ENCODE measurements at regions of chr14 and their contacts with region 1.

Region 1: DNA sequence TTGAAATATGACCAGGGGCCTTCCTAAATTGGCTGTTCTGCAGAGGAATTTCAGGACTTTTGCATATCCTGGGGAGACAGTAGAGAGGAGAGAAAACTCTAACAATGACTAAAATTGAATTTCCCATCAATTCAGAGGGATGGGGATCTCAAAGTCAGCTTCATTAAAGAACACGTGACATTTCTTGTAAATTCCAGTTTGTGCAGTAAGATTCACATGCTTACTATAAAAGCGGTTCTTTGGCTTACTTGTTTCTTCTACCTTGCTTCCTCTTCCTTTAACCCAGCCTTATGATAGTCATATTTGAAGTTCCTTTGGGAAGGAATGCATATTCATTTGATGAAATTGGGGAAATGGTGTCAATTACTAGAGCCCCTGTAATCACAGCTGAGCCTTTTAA is 143.7 kb upstream of the GZMB start:
- DNase-seq: no peak
- ATAC-seq: no peak
- H3K4me3 ChIP-seq: no peak overlapping the region
- H3K27ac ChIP-seq: no peak overlapping the region
- H3K4me1 ChIP-seq: no peaks in the 10 kb centered on the region
- H3K27me3 ChIP-seq: no peaks in the 10 kb centered on the region
- CTCF ChIP-seq: no peak

Region 2: DNA sequence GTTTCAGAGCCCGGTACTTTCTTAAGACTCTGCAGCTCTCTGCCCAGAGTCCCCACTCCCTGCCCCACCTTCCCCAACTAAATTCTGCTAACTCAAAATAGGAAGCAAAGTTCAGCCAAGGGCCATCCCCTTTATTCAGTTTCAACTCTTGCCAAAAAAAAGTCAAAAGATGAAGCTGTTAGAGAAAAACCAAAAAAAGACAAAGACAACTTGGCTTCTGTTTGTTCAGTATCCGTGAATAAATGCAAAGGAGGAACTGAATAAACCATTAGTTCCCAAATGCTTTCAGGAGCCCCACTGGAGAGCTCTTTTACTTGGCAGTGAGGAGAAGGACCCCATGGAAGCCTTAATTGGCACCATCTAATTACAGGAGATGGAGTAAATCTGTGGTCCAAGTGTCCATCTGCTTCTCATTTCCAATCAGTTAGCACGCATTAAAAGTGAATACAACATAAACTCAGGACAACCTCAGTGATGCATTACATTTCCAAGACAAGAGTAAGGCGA is 11.8 kb after region 1 on chr14:
- intact Hi-C with region 1: loop called in 1 of 2 experiments (anchors 1 kb)
- DNase-seq: no peak
- ATAC-seq: no peak
- H3K4me3 ChIP-seq: no peak overlapping the region
- H3K27ac ChIP-seq: no peak overlapping the region
- H3K4me1 ChIP-seq: no peaks in the 10 kb centered on the region
- H3K27me3 ChIP-seq: no peaks in the 10 kb centered on the region
- CTCF ChIP-seq: no peak

Region 3: DNA sequence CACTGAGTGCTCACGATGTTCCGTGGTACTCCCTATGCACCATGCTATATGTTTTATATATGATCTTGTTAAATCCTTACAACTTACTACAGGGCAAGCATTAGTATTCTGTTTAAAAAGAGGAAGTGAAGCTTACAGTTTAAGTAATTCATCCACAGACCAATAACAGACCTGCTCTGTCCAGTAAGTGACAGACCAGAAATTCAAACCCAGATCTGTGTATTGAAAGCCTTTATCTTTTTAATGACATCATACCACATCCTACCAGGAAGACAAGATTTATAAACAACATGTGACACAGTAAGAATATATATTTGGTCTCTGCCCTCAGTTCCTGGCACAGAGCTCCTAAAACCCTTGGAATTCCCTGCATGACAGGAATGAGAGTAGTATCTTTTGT is 65.8 kb after region 1 on chr14:
- intact Hi-C with region 1: no loop called
- DNase-seq: no peak
- ATAC-seq: no peak
- H3K4me3 ChIP-seq: no peak overlapping the region
- H3K27ac ChIP-seq: no peak overlapping the region
- H3K4me1 ChIP-seq: no peaks in the 10 kb centered on the region
- H3K27me3 ChIP-seq: no peaks in the 10 kb centered on the region
- CTCF ChIP-seq: no peak

Region 4: GRCh38 chr14:25049568-25050268 is 272.0 kb after region 1 on chr14 and contains the start of gene STXBP6:
- intact Hi-C with region 1: no loop called
- DNase-seq: peak; percentile 76 to 80
- ATAC-seq: peak; percentile 46 to 80 (median 75)
- H3K4me3 ChIP-seq: peak within 1 kb of the TSS; percentile 71
- H3K27ac ChIP-seq: peak within 1 kb of the TSS; percentile 46
- H3K4me1 ChIP-seq: no peaks in the 10 kb centered on the region
- H3K27me3 ChIP-seq: peaks cover 0 to 51% (median 5%) of the 10 kb centered on the region in 3 donors
- CTCF ChIP-seq: no peak
- total RNA-seq, gene STXBP6: 1.1 to 3.5 (median 2.5) TPM